Aorta (tissue), 5 donors: ENCODE measurements at regions of chr7 and their contacts with region 1.

Region 1: DNA sequence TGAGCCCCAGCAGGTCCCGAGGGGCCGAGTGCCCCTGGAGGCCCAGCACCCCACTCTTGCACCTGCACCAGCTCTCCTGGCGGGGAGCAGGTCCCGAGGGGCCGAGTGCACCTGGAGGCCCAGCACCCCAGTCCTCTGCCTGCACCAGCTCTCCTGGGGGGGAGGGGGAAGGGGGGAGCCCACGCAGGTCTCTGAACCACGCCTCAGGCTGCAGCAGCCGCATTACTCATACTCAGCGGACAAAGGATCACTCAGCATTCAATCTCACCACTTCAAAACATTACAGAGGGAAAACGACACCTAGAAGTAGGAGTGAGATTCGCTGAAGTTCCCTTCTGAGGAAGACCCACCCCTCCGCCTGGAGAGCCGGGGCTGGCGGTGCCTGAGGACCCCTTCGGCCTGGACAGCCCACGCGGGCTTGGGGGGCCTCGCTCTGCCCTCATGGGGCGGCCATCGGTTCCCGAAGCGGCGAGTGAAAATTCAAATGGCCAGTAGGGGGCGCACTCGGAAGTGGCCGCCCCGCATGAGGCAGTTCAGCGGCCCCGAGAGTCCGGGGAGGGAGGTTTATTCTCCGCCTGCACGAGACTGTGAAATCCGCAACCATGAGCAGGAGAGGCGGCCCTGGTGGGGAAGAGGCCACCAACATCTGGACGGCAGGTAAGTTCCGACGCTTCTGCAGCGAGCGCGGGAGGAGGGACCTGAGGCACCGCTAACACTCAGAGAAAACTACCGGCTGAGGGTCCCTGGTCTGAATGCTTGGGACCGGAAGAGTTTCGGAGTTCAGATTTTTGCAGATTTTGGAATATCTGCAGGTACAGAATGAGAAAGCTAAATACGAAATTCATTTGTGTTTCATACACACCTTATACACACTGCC is 1.1 kb upstream of the GPER1 start:
- DNase-seq: peak; percentile 82 to 93
- ATAC-seq: peak; percentile 86
- H3K4me3 ChIP-seq: no peak overlapping the region
- H3K27ac ChIP-seq: no peak overlapping the region
- H3K4me1 ChIP-seq: no peaks in the 10 kb centered on the region
- H3K27me3 ChIP-seq: no peaks in the 10 kb centered on the region

Region 2: GRCh38 chr7:1123715-1124114 is 36.9 kb after region 1 on chr7:
- intact Hi-C with region 1: loop called (anchors 2 kb)
- DNase-seq: peak; percentile 94 to 97
- ATAC-seq: peak; percentile 94
- H3K4me3 ChIP-seq: no peak overlapping the region
- H3K27ac ChIP-seq: peak overlapping the region; percentile 31 to 91
- H3K4me1 ChIP-seq: no peaks in the 10 kb centered on the region
- H3K27me3 ChIP-seq: no peaks in the 10 kb centered on the region

Region 3: DNA sequence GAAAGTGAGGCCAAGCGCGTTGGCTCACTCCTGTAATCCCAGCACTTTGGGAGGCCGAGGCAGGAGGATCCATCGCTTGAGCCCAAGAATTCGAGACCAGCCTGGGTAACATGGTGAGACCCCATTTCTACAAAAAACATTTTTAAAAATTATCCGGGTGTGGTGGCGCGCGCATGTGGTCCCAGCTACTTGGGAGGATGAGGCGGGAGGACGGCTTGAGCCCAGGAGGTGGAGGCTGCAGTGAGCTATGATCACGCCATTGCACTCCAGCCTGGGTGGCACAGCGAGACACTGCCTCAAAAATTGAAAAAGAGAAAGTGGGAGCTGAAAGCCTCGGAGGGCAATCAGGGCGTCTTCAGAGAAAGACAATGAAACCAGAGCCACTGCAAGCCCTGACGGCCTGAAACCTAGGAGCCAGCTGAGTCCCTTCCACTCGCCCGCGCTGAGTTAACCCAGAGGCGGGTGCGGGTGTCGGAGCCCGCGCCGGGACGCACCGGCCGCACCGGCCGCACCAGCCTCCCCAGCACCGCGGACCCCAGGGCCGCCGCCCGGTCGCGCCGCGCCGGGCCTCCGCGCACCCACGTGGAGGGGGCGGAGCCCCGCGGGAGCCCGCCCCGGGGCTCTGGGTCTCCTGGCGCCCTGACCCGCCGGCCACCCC is 50.8 kb after region 1 on chr7:
- intact Hi-C with region 1: loop called (anchors 5 kb)
- DNase-seq: no peak
- ATAC-seq: peak; percentile 90
- H3K4me3 ChIP-seq: peak overlapping the region; percentile 68 to 76
- H3K27ac ChIP-seq: no peak overlapping the region
- H3K4me1 ChIP-seq: no peaks in the 10 kb centered on the region
- H3K27me3 ChIP-seq: no peaks in the 10 kb centered on the region